ENCODE measurements at regions of chr16 and their contacts with region 1.

Region 1: DNA sequence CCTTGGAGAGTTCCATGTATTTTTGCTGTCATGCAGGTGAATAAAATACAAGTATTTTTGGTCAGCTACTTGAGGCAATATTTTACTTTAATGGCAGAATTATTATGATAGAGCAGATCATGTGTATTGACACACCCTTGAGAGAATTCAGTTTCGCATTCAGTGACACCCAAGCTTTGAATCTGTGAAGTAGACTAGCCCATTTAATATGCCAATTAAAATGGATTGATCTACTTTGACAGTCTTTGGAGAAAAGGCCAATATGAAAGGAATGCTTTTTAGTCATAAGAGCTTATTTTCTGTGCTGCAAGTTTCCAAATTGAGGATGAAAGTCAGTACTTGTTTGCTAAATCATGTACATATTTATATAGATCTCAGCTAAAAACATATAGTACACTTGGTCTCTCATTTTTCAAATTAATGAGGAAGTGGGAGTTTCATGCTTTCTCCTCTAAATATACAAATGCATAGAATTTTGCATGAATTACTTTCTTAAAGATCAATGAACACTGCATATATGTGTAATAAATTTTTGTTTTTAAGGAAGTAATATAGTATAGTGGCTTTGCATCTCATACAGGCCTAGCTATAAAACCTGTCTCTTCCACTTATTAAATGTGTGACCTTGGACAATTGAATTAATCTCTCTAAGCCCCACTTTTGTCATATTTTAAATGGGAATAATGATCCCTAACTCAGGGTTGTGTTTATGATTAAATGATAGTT is 161.5 kb downstream of the PHKB start:
- DNase-seq: no peak
- H3K4me3 ChIP-seq: no peak overlapping the region
- H3K27ac ChIP-seq: no peak overlapping the region
- H3K4me1 ChIP-seq: no peaks in the 10 kb centered on the region
- H3K27me3 ChIP-seq: no peaks in the 10 kb centered on the region
- CTCF ChIP-seq: no peak

Region 2: DNA sequence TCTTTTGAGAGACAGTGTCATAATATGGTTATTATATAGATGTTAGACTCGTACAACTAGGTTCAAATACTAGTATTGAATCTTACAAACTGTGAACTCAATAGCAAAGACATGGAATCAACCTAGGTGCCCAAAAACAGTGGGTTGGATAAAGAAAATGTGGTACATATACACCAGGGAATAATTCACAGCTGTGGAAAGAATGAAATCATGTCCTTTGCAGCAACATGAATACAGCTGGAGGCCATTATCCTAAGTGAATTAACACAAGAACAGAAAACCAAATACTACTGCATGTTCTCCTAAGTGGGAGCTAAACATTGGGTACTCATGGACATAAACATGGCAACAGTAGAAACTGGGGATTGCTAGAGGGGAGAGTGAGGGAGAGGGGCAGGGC is 153.4 kb before region 1 on chr16:
- CTCF ChIA-PET with region 1: no interaction called
- POLR2A ChIA-PET with region 1: interaction called, 27 read pairs
- intact Hi-C with region 1: no loop called
- DNase-seq: no peak
- H3K4me3 ChIP-seq: no peak overlapping the region
- H3K27ac ChIP-seq: no peak overlapping the region
- H3K4me1 ChIP-seq: no peaks in the 10 kb centered on the region
- H3K27me3 ChIP-seq: no peaks in the 10 kb centered on the region
- CTCF ChIP-seq: no peak

Measured in PC-9 (cell line).